MCF 10A (cell line): ENCODE measurements at regions of chr4 and their contacts with region 1.

Region 1: DNA sequence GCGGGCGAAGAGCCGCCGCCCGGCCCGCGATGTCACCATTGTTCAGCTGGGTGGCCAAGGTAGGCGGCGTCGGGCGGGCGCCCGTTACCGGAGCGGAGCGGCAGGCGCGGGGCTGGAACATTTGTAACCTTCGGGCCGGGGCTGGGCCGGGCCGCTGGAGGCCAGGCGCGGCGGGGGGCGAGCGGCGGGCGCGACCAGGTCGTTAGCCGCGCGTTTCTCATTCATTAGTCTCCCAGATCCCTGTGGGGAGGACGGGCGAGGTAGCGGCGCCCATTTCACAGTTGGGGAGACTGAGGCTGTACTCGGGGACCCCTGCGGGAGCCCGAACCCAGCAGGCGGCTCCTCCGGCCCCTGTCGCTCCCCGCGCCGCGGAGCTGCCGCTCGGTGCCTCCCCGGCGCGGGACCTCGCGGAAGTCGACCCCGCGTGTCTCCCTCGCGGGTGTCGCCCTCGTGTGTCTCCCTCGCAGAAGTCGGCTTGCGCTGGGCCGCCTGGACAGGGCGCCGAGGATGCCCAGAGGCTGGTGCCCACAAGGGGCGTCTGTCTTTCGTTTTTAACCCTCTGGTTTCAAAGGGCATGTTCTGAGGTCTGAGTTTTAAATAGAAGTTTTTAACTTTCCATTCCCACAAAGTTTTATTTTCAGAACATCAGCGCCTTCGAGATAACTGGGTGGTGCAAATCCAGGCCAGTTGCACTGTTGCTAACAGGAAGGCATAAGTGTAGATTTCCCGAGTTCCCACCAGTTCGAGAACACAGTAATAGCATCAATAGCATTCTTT is 17.5 kb downstream of the PTTG2 start:
- DNase-seq: peak; percentile 57
- H3K4me3 Mint-ChIP-seq: peak overlapping the region; percentile 77
- H3K27ac Mint-ChIP-seq: no peak overlapping the region
- H3K4me1 Mint-ChIP-seq: peaks cover 9% of the 10 kb centered on the region
- H3K27me3 Mint-ChIP-seq: no peaks in the 10 kb centered on the region
- CTCF ChIP-seq: peak; percentile 52

Region 2: GRCh38 chr4:36904823-36905222 is 1072.8 kb before region 1 on chr4:
- CTCF ChIA-PET with region 1: no interaction called
- POLR2A ChIA-PET with region 1: no interaction called
- intact Hi-C with region 1: no loop called
- DNase-seq: no peak
- H3K4me3 Mint-ChIP-seq: no peak overlapping the region
- H3K27ac Mint-ChIP-seq: no peak overlapping the region
- H3K4me1 Mint-ChIP-seq: no peaks in the 10 kb centered on the region
- H3K27me3 Mint-ChIP-seq: no peaks in the 10 kb centered on the region
- CTCF ChIP-seq: no peak

Region 3: GRCh38 chr4:37802068-37802666 is 175.5 kb before region 1 on chr4:
- CTCF ChIA-PET with region 1: interaction called, 9 read pairs
- POLR2A ChIA-PET with region 1: interaction called, 3 read pairs
- intact Hi-C with region 1: loop called (anchors 1 kb)
- DNase-seq: peak; percentile 87
- H3K4me3 Mint-ChIP-seq: no peak overlapping the region
- H3K27ac Mint-ChIP-seq: no peak overlapping the region
- H3K4me1 Mint-ChIP-seq: peaks cover 10% of the 10 kb centered on the region
- H3K27me3 Mint-ChIP-seq: no peaks in the 10 kb centered on the region
- CTCF ChIP-seq: peak; percentile 53

Region 4: GRCh38 chr4:37891260-37892159 is 86.1 kb before region 1 on chr4:
- CTCF ChIA-PET with region 1: interaction called, 3 read pairs
- POLR2A ChIA-PET with region 1: no interaction called
- intact Hi-C with region 1: loop called (anchors 5 kb)
- DNase-seq: peak; percentile 33
- H3K4me3 Mint-ChIP-seq: peak overlapping the region; percentile 72
- H3K27ac Mint-ChIP-seq: no peak overlapping the region
- H3K4me1 Mint-ChIP-seq: no peaks in the 10 kb centered on the region
- H3K27me3 Mint-ChIP-seq: no peaks in the 10 kb centered on the region
- CTCF ChIP-seq: no peak

Region 5: GRCh38 chr4:37989398-37990260 is 12.0 kb after region 1 on chr4:
- CTCF ChIA-PET with region 1: interaction called, 10 read pairs
- POLR2A ChIA-PET with region 1: interaction called, 3 read pairs
- intact Hi-C with region 1: no loop called
- DNase-seq: no peak
- H3K4me3 Mint-ChIP-seq: no peak overlapping the region
- H3K27ac Mint-ChIP-seq: no peak overlapping the region
- H3K4me1 Mint-ChIP-seq: no peaks in the 10 kb centered on the region
- H3K27me3 Mint-ChIP-seq: no peaks in the 10 kb centered on the region
- CTCF ChIP-seq: no peak

Region 6: GRCh38 chr4:38034986-38035882 is 57.6 kb after region 1 on chr4:
- CTCF ChIA-PET with region 1: no interaction called
- POLR2A ChIA-PET with region 1: no interaction called
- intact Hi-C with region 1: loop called (anchors 5 kb)
- DNase-seq: peak; percentile 79
- H3K4me3 Mint-ChIP-seq: no peak overlapping the region
- H3K27ac Mint-ChIP-seq: no peak overlapping the region
- H3K4me1 Mint-ChIP-seq: no peaks in the 10 kb centered on the region
- H3K27me3 Mint-ChIP-seq: no peaks in the 10 kb centered on the region
- CTCF ChIP-seq: peak; percentile 62

Region 7: GRCh38 chr4:38204339-38205035 is 226.8 kb after region 1 on chr4:
- CTCF ChIA-PET with region 1: no interaction called
- POLR2A ChIA-PET with region 1: no interaction called
- intact Hi-C with region 1: no loop called
- DNase-seq: no peak
- H3K4me3 Mint-ChIP-seq: no peak overlapping the region
- H3K27ac Mint-ChIP-seq: no peak overlapping the region
- H3K4me1 Mint-ChIP-seq: no peaks in the 10 kb centered on the region
- H3K27me3 Mint-ChIP-seq: no peaks in the 10 kb centered on the region
- CTCF ChIP-seq: no peak